CD14-positive monocyte (primary cell): ENCODE measurements at regions of chr2 and their contacts with region 1.

Region 1: DNA sequence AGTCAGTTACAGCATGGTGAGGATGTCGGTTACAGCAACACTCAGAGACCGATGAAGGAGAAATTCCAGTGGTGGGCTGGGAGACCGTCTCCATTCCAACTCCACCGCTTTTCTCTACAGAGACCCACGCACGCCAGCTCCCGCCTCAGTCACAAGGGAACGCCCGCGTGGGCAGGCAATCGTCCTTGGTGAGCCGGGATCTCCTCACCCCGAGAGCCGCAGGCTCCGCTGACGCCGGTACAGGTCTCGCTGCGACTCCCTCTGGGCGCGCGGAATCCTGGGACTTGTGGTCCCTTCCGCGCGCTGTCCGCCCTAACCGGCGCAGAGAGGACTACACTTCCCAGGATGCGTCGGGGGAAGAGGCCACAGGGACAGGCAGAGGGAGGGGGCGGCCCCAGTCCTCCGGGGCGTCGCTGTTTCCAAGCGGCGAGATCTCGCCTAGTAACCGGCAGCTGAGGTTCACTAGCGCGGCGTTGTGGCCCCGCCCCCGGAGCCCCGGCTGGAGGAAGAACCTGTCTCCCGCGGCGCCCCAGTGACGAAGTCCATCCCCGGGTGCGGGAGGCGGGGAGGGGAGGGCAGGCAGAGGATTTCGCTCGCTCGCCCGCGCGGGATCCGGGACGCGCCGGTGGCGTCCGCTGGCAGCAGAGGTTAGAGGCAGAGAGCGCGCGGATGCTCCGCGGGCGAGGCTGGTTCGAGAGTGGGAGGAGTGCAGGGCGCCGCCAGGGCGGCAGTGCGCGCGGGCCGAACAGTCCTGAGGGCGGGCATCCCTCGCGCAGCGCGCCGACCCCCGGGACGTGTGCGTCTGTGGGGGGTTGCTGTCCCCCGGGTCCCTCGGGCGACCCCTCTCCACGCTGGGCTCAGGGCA is at the start of gene EML6:
- DNase-seq: peak; percentile 98
- H3K4me3 ChIP-seq: peak within 1 kb of the TSS; percentile 55 to 83 (median 58)
- H3K4me3 Mint-ChIP-seq: peak within 1 kb of the TSS; percentile 95 to 96
- H3K27ac ChIP-seq: peak within 1 kb of the TSS in 1 of 2 donors; percentile 37
- H3K27ac Mint-ChIP-seq: peak within 1 kb of the TSS; percentile 22 to 87 (median 71)
- H3K4me1 ChIP-seq: peaks cover 20 to 27% of the 10 kb centered on the region in 2 donors
- H3K4me1 Mint-ChIP-seq: peaks cover 19% of the 10 kb centered on the region
- H3K27me3 ChIP-seq: peaks cover 32 to 49% of the 10 kb centered on the region in 2 donors
- H3K27me3 Mint-ChIP-seq: peaks cover 34 to 62% (median 42%) of the 10 kb centered on the region in 3 donors
- CTCF ChIP-seq: no peak
- polyA plus RNA-seq, gene EML6: 0.79 TPM in 1 of 3 donors, not detected in the others

Region 2: GRCh38 chr2:54115284-54116137 is 607.9 kb before region 1 on chr2 and contains the start of gene ACYP2:
- intact Hi-C with region 1: loop called (anchors 5 to 10 kb)
- DNase-seq: peak; percentile 90 to 96 (median 92)
- H3K4me3 ChIP-seq: peak within 1 kb of the TSS; percentile 79 to 84 (median 84)
- H3K4me3 Mint-ChIP-seq: peak within 1 kb of the TSS; percentile 90 to 97
- H3K27ac ChIP-seq: peak within 1 kb of the TSS; percentile 98
- H3K27ac Mint-ChIP-seq: peak within 1 kb of the TSS; percentile 99 to 100 (median 100)
- H3K4me1 ChIP-seq: peaks cover 6 to 11% of the 10 kb centered on the region in 2 donors
- H3K4me1 Mint-ChIP-seq: peaks cover 9% of the 10 kb centered on the region
- H3K27me3 ChIP-seq: no peaks in the 10 kb centered on the region
- H3K27me3 Mint-ChIP-seq: peaks cover 0 to 8% (median 5%) of the 10 kb centered on the region in 3 donors
- CTCF ChIP-seq: no peak
- polyA plus RNA-seq, gene ACYP2: 6.2 to 10.8 (median 10.3) TPM

Region 3: DNA sequence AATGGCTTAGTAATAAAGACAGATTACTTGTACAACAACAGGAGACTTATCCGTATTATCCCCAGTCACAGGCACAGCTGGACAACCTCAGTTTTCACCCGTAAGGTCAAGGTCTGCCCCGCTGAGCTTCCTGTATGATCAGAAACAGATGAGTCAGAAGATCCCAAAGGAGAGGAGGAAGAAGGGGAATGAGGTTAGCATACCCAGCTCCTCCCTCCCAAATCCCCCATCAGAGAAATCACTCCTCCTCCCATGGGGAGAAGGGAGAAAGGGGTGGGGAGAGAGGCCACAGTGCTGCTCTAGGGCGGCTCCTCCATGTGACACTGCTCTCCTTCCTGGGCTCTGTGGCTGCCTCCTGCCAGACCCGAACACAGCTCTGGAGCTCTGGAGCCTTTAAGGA is 321.0 kb before region 1 on chr2:
- intact Hi-C with region 1: no loop called
- DNase-seq: no peak
- H3K4me3 ChIP-seq: no peak overlapping the region
- H3K4me3 Mint-ChIP-seq: peak overlapping the region in 1 of 2 donors; percentile 62
- H3K27ac ChIP-seq: no peak overlapping the region
- H3K27ac Mint-ChIP-seq: no peak overlapping the region
- H3K4me1 ChIP-seq: peaks cover 6 to 8% of the 10 kb centered on the region in 2 donors
- H3K4me1 Mint-ChIP-seq: peaks cover 10% of the 10 kb centered on the region
- H3K27me3 ChIP-seq: peaks cover 14 to 31% of the 10 kb centered on the region in 2 donors
- H3K27me3 Mint-ChIP-seq: peaks cover 30 to 46% (median 44%) of the 10 kb centered on the region in 3 donors
- CTCF ChIP-seq: no peak

Region 4: GRCh38 chr2:54767921-54768320 is 44.6 kb after region 1 on chr2:
- intact Hi-C with region 1: no loop called
- DNase-seq: no peak
- H3K4me3 ChIP-seq: no peak overlapping the region
- H3K4me3 Mint-ChIP-seq: no peak overlapping the region
- H3K27ac ChIP-seq: no peak overlapping the region
- H3K27ac Mint-ChIP-seq: no peak overlapping the region
- H3K4me1 ChIP-seq: no peaks in the 10 kb centered on the region
- H3K4me1 Mint-ChIP-seq: peaks cover 2% of the 10 kb centered on the region
- H3K27me3 ChIP-seq: no peaks in the 10 kb centered on the region
- H3K27me3 Mint-ChIP-seq: peaks cover 0 to 1% (median 0%) of the 10 kb centered on the region in 3 donors
- CTCF ChIP-seq: no peak

Region 5: DNA sequence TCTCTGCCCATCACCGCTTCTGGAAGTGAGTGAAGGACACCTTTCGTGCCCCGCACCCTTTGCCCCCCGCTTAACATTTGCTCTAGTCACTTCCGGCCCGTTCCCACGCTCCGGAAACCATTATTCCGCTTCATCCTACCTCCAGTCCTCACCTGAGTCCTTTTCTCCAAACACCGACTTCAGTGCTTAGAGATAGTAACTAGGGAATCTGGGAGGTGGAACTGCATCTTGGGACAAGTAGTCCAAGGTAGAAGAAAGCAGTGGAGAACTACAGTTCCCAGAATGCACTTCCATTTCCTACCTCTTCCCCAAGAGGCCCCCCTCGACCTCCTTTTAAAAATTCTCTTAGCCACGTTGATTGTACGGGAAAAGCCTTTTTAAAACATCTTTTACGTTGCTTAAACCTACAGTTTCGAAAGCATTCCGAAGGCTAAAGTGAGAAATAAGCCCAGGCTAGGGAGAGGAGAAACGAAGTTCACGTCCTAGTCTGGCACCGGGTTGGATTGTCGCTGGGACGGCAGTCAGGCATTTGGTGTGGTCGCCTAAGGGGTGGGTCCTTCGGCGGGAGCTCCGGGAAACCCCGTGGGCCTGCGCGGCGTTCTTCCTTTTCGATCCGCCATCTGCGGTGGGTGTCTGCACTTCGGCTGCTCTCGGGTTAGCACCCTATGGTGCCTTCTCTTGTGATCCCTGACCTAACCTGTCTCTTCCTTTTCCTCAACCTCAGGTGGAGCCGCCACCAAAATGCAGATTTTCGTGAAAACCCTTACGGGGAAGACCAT is 508.9 kb after region 1 on chr2 and contains the starts of genes CLHC1 and RPS27A:
- intact Hi-C with region 1: loop called in 1 of 2 experiments (anchors 5 kb)
- DNase-seq: peak; percentile 85 to 90 (median 89)
- H3K4me3 ChIP-seq: peak within 1 kb of the TSS; percentile 59 to 86 (median 84)
- H3K4me3 Mint-ChIP-seq: peak within 1 kb of the TSS; percentile 100
- H3K27ac ChIP-seq: peak within 1 kb of the TSS; percentile 72 to 93
- H3K27ac Mint-ChIP-seq: peak within 1 kb of the TSS; percentile 91 to 99 (median 97)
- H3K4me1 ChIP-seq: peaks cover 30 to 42% of the 10 kb centered on the region in 2 donors
- H3K4me1 Mint-ChIP-seq: peaks cover 35% of the 10 kb centered on the region
- H3K27me3 ChIP-seq: no peaks in the 10 kb centered on the region
- H3K27me3 Mint-ChIP-seq: no peaks in the 10 kb centered on the region
- CTCF ChIP-seq: no peak
- polyA plus RNA-seq, gene CLHC1: 2.4 to 5.0 TPM in 2 of 3 donors, not detected in the other
- polyA plus RNA-seq, gene RPS27A: 785 to 1,452 (median 967) TPM